Mammary epithelial cell (primary cell): ENCODE measurements at regions of chr9 and their contacts with region 1.

Region 1: DNA sequence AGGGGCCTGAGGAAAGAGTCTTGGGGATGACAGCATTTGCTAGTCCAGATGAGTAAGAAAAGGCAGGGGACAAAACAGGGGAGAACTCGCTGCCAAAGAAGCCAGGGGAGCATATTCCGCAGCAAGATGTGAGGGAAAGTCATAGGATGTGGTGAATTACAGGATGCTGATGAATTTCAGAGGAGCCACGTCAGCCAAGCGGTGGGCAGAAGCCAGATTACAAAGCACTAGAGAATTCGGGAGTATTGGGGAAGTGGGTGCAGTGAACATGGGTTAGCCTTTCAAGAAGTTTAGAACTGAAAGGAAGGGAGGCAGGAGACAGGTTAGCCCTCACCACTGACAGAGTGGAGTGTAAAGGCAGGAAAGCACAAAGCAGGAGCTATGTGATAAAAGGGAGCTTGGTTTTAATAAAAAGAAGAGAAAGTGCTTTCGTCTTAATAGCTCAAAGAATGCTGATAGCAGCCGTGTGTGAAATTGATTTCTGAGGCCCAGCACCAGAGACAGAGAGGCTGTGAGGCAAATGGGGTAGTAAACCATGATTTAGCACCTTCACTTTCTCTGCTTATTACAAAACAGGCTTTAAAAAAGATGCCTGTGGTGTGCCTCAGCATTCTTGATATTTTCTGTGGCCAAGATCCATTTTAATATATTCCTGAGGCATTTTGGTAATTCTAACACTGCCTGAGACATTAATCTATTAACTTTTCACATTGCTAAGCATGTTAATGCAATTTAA is 16.9 kb downstream of the ADAMTSL1 start:
- DNase-seq: peak; percentile 96
- H3K4me3 ChIP-seq: peak overlapping the region in 2 of 3 experiments; percentile 6 to 16
- H3K27ac ChIP-seq: peak overlapping the region; percentile 93
- H3K4me1 ChIP-seq: peaks cover 56% of the 10 kb centered on the region
- H3K27me3 ChIP-seq: no peaks in the 10 kb centered on the region
- CTCF ChIP-seq: no peak

Region 2: DNA sequence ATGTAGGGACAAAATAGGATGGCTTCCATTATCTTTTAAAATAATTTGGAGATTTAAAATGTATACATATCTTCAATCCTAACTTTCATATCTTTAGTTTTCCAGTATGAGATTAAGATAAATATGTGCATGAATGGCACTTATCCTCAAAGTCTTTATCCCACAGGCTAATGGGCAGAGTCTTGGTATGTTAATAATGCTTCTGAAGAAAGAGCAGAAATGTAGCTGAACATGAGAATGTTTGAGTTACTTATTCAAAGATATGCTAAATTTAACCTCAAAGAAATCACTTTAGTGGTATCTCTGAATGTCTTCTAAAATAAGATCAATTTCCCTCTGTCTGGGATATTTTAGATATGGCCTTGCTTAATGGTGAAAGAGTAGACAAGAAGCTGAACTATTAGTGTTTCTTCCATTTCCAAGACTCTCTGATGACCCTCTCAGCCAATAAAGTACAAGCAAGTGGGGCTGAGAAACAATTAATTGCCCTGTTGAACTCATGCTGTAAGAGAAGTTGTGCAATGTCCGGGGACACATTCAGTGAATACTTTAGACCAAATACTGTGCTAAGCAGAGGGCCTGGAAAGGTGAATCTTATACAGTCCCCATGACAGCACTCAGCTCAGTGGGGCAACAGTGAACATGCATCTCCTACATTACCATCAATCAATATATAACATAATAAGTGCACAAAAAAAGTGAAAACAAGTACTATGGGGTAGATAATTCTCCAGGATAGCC is 66.8 kb before region 1 on chr9:
- CTCF ChIA-PET with region 1: no interaction called
- dilution Hi-C with region 1: no loop called
- in situ Hi-C with region 1: no loop called
- intact Hi-C with region 1: no loop called
- DNase-seq: no peak
- H3K4me3 ChIP-seq: no peak overlapping the region
- H3K27ac ChIP-seq: no peak overlapping the region
- H3K4me1 ChIP-seq: peaks cover 5% of the 10 kb centered on the region
- H3K27me3 ChIP-seq: no peaks in the 10 kb centered on the region
- CTCF ChIP-seq: no peak

Region 3: DNA sequence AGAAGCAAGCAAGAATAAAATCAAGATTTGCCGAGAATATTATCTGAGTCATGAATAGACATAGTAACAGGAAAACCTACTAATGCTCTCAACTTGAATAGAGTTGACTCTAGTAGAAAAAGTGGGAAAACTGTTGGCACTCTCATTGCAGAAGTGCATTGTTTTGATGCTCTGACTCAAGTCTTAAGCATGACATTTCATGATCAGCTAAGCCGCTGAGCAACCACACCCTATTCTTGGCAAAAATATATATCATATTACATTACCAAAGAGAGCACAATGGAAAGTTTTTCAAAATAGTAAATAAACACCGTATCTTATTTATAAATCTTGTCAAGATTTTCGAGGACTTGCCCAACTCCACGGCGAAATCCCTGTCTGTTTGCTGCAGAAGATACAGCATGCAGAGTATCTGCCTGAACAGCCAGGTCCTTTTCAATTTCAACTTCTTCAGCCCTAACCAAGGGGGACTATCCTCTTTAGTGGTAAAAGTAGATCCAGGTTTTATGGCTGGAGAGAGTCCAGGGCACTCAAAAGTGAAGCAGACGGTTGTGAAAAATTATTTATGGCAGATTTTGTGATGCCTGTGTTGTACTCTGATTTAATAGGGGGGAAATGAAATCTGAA is 30.7 kb before region 1 on chr9:
- CTCF ChIA-PET with region 1: no interaction called
- dilution Hi-C with region 1: no loop called
- in situ Hi-C with region 1: no loop called
- intact Hi-C with region 1: loop called (anchors 1 kb)
- DNase-seq: peak; percentile 92
- H3K4me3 ChIP-seq: no peak overlapping the region
- H3K27ac ChIP-seq: peak overlapping the region; percentile 89
- H3K4me1 ChIP-seq: peaks cover 54% of the 10 kb centered on the region
- H3K27me3 ChIP-seq: no peaks in the 10 kb centered on the region
- CTCF ChIP-seq: no peak

Region 4: GRCh38 chr9:18605766-18606180 is 115.0 kb after region 1 on chr9:
- CTCF ChIA-PET with region 1: no interaction called
- dilution Hi-C with region 1: no loop called
- in situ Hi-C with region 1: no loop called
- intact Hi-C with region 1: loop called (anchors 10 kb)
- DNase-seq: no peak
- H3K4me3 ChIP-seq: no peak overlapping the region
- H3K27ac ChIP-seq: no peak overlapping the region
- H3K4me1 ChIP-seq: no peaks in the 10 kb centered on the region
- H3K27me3 ChIP-seq: no peaks in the 10 kb centered on the region
- CTCF ChIP-seq: no peak